Panc1 (cell line): ENCODE measurements at regions of chr11 and their contacts with region 1.

Region 1: GRCh38 chr11:5865826-5866225 is 8.3 kb upstream of the OR52E8 start:
- DNase-seq: no peak
- ATAC-seq: no peak
- H3K4me3 ChIP-seq: no peak overlapping the region
- H3K27ac ChIP-seq: no peak overlapping the region
- H3K4me1 ChIP-seq: no peaks in the 10 kb centered on the region
- H3K27me3 ChIP-seq: no peaks in the 10 kb centered on the region
- CTCF ChIP-seq: no peak

Region 2: DNA sequence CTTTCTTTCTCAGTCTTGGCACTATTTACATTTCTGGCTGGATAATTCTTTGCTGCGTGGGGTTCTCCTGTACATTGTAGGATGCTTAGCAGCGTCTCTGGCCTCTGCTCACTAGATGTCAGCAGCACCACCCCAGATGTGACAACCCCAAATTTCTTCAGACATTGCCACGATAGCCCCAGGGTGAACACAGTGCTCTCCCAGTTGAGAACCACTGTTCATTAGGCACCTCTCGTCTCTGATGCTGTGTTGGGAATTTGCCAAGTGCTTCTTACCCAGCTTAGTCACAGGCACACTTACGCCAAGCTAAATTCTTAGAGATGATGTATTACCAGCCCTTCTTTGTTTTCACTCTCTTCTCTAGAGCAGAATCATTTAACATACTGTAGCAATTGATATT is 260.0 kb before region 1 on chr11:
- CTCF ChIA-PET with region 1: no interaction called
- POLR2A ChIA-PET with region 1: interaction called, 16 read pairs
- in situ Hi-C with region 1: no loop called
- intact Hi-C with region 1: no loop called
- DNase-seq: no peak
- ATAC-seq: no peak
- H3K4me3 ChIP-seq: no peak overlapping the region
- H3K27ac ChIP-seq: no peak overlapping the region
- H3K4me1 ChIP-seq: peaks cover 10% of the 10 kb centered on the region
- H3K27me3 ChIP-seq: no peaks in the 10 kb centered on the region
- CTCF ChIP-seq: no peak

Region 3: DNA sequence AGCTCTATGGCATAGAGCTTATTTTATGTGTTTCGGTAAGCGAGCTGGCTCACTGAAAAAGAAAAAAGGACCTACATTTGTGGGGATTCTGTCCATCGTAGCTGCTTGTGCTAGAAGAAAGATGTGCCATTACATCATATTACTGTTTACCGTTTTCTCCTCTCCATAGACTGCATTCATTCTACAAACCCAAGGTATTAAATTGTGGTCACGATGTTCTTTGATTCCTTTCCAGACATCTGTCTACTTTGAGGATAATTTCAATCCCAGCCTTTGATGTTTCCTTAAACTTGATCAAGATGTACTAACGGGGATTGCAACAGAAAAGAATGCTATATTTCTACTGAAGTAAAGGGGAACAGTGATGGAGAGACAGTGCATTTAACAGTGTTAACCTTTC is 69.3 kb before region 1 on chr11:
- CTCF ChIA-PET with region 1: no interaction called
- POLR2A ChIA-PET with region 1: no interaction called
- in situ Hi-C with region 1: no loop called
- intact Hi-C with region 1: no loop called
- DNase-seq: no peak
- ATAC-seq: no peak
- H3K4me3 ChIP-seq: no peak overlapping the region
- H3K27ac ChIP-seq: no peak overlapping the region
- H3K4me1 ChIP-seq: no peaks in the 10 kb centered on the region
- H3K27me3 ChIP-seq: no peaks in the 10 kb centered on the region
- CTCF ChIP-seq: no peak